ENCODE measurements at regions of chr21 and their contacts with region 1.

Region 1: GRCh38 chr21:42381334-42381984 is 14.4 kb downstream of the TMPRSS3 start:
- DNase-seq: peak; percentile 65
- H3K4me3 Mint-ChIP-seq: no peak overlapping the region
- H3K27ac Mint-ChIP-seq: no peak overlapping the region
- H3K4me1 Mint-ChIP-seq: peaks cover 17% of the 10 kb centered on the region
- H3K27me3 Mint-ChIP-seq: no peaks in the 10 kb centered on the region
- CTCF ChIP-seq: peak; percentile 78

Region 2: DNA sequence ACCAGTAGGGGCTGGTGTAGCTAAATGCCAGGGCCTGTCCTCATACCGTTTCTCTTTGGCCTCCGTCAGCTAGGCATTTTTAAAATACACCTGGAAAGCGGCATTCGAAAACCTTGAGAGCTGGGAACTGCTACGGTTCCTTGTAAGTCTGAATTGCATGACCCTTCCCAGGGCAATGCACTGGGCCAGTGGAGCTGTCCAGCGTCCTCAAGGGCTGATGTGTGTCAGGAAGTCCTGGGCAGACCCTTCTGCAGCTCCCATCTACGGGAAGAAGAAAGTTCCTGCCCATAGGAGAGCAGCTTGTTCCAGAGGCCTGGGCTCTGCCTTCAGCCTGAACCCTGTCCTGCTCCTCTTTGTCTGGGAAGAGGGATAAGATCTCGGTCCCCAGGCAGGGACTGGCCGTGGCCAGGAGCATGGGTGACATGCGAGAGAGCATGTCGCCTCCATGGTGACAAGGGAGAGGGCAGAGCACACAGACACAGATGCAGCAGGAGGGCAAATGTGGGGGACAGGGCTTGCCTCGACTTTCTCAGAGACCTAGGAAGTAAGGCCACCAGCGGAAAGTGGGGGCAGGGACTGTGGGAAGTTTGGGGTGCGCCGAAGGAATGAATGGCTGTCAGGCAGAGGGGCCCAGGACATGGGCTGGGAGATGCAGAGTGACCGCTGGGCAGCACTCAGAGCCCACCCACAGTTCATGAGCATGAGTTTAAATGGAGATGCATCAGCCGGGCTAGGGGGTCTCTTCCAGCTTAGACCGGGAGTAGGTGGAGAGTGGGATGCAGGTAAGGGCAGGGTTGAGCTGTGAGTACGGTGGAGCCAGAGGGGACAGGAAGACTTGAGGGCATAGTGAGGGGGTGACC is 56.6 kb after region 1 on chr21:
- CTCF ChIA-PET with region 1: no interaction called
- intact Hi-C with region 1: loop called (anchors 10 kb)
- DNase-seq: no peak
- H3K4me3 Mint-ChIP-seq: no peak overlapping the region
- H3K27ac Mint-ChIP-seq: no peak overlapping the region
- H3K4me1 Mint-ChIP-seq: peaks cover 22% of the 10 kb centered on the region
- H3K27me3 Mint-ChIP-seq: peaks cover 25% of the 10 kb centered on the region
- CTCF ChIP-seq: no peak